ENCODE measurements at regions of chr11 and their contacts with region 1.

Region 1: GRCh38 chr11:2166091-2166851 is 5.3 kb upstream of the INS start:
- DNase-seq: no peak
- H3K27ac ChIP-seq: 0 out of 2 replicates have a peak overlapping the region, but pooled peaks have one; percentile 16
- CTCF ChIP-seq: peak; percentile 81

Region 2: DNA sequence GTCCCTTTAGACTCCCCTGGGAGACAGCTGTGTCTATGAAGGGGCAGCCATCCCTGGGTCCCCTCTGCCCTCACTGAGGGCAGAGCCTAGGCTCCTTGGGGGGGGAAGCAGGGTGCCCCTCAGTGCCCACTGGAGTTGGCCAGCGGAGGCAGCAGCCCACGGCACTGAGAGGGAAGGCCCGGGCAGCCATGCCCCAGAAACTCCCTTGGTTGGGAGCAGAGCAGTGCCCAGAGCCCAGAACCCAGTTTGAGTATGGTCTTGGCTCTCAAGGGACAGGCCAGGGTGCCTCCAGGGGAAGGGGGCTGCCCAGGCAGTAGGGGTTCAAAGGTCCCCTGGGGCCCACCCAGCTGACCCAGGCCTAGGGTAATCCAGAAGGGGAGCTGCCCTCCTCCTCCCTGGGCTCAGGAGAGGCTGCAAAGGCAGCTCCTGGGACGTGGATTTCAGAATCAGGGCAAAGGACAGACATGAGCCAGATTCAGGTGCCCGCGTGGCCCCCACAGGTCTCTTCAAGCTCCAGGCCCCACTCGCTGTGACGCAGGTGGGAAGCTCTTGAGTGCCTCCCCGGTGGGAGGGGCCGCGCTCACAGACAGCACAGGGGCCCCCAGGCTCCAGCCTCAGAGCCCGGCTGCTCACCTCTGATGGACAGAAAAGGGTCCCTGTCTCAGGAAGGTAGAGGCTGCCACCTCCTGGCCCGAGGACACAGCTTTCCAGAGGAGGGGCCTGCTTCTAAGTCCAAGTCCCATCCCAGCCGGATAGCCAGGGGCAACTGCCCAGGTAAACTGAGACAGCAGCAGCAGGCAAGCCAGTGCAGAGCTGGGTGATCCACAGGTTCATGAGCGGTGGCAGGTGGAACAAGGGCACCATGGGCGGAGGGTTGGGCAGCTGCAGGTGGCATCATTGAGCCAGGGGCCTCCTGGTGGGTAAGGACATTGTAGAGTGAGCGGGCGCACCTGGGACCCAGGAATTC is 132.8 kb after region 1 on chr11:
- CTCF ChIA-PET with region 1: interaction called, 23 read pairs
- POLR2A ChIA-PET with region 1: no interaction called
- DNase-seq: peak; percentile 57
- H3K27ac ChIP-seq: no peak overlapping the region
- CTCF ChIP-seq: peak; percentile 31